Head of caudate nucleus (tissue), 42 donors: ENCODE measurements at regions of chr5 and their contacts with region 1.

Region 1: GRCh38 chr5:42807722-42808447 is 3.8 kb downstream of the SELENOP start:
- DNase-seq: peak in 26 of 42 donors; percentile 12 to 77 (median 34)

Region 2: GRCh38 chr5:42721484-42721883 is 86.4 kb before region 1 on chr5:
- intact Hi-C with region 1: no loop called
- DNase-seq: no peak

Region 3: GRCh38 chr5:42858031-42858643 is 50.3 kb after region 1 on chr5:
- intact Hi-C with region 1: loop called (anchors 5 kb)
- DNase-seq: peak in 36 of 42 donors; percentile 12 to 87 (median 64)

Region 4: GRCh38 chr5:42889311-42889933 is 81.5 kb after region 1 on chr5:
- intact Hi-C with region 1: loop called (anchors 10 kb)
- DNase-seq: peak; percentile 42 to 95 (median 84)

Region 5: GRCh38 chr5:43556857-43557542 is 749.1 kb after region 1 on chr5 and contains the start of gene PAIP1:
- intact Hi-C with region 1: no loop called
- DNase-seq: peak; percentile 27 to 90 (median 80)